ENCODE measurements at regions of chr6 and their contacts with region 1.

Region 1: GRCh38 chr6:157198419-157199279 is 124.7 kb downstream of the TMEM242 start:
- DNase-seq: peak; percentile 85 to 92
- H3K4me3 ChIP-seq: no peak overlapping the region
- H3K27ac ChIP-seq: no peak overlapping the region
- H3K4me1 ChIP-seq: peaks cover 32% of the 10 kb centered on the region
- H3K27me3 ChIP-seq: no peaks in the 10 kb centered on the region
- CTCF ChIP-seq: no peak

Region 2: DNA sequence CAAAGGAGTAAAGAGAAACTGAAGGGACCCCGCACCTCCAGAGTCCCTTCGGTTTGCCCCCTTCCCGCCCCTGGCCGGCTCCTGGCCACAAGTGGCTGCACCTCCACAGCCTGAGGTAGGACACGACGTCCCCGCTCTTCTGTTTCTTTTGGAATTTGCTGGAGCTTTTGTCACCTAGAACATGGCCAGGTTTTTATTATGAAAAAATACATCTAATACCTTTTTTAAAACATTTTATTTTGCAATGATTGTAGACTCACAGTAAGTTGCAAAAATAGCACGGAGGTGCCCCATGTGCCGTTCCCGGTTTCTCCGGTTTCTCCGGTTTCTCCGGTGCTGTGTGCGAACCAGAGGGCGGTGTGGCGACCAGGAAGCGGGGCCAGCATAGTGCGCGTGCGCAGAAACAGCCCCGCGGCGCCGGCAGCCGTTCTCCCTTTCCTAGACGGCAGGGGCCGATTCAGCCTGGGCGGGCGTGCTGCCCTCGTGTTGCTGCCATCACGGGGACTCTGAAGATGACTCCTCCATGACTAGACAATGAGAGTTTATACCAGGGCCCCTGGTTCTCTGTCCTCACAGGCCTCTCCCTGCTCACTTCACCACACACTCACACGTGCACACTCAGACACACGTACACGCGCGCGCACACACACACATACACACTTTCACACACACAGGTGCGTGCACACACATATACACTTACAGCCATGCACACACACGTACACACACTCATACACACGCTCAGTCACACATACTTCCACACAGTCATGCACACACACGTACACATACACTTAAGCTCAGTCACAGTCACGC is 22.6 kb after region 1 on chr6:
- CTCF ChIA-PET with region 1: no interaction called
- POLR2A ChIA-PET with region 1: interaction called, 3 read pairs
- intact Hi-C with region 1: loop called (anchors 1 kb)
- DNase-seq: peak; percentile 80 to 88
- H3K4me3 ChIP-seq: peak overlapping the region; percentile 53
- H3K27ac ChIP-seq: peak overlapping the region; percentile 73
- H3K4me1 ChIP-seq: peaks cover 22% of the 10 kb centered on the region
- H3K27me3 ChIP-seq: no peaks in the 10 kb centered on the region
- CTCF ChIP-seq: no peak

Region 3: GRCh38 chr6:157274471-157275226 is 76.0 kb after region 1 on chr6:
- CTCF ChIA-PET with region 1: no interaction called
- POLR2A ChIA-PET with region 1: no interaction called
- intact Hi-C with region 1: loop called (anchors 10 kb)
- DNase-seq: peak in 1 of 2 experiments; percentile 75
- H3K4me3 ChIP-seq: peak overlapping the region; percentile 72
- H3K27ac ChIP-seq: no peak overlapping the region
- H3K4me1 ChIP-seq: no peaks in the 10 kb centered on the region
- H3K27me3 ChIP-seq: no peaks in the 10 kb centered on the region
- CTCF ChIP-seq: peak; percentile 39; the same call in 1 of the 2 replicates